ENCODE measurements at regions of chr16 and their contacts with region 1.

Region 1: DNA sequence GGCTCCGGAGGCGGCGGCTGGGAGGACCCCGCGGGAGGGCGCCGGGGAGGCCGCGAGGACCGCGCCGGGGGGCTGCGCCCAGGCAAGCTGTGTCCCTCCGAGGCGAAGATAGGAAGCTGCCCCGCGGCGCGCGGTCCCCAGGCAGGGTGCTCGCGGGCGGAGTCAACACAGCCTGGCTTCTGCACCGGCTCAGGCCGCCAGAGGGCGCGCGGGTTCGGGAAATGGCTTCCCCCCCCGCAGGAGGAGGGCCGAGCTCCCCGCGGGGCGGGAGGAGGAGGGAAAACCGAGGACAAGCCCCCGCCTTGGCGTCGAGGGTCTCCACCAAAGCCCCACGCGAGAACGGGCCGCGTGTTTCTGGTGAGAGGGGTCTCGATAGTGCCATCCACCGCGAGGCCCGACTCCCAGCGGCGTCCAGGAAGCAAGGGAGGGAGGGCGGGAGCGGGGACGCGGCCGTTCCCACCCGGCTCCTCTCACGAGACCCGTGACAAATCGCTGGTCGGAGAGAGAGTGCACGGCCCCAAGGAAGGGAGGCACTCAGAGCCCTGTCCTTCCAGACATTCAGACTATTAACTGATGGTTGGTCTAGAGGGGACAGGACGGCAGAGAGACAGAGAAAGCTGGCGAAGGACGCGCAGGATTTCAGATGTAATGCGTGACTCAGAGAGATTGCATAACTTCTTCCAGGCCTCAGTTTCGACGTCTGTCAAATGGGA is 64.4 kb upstream of the DNAJA2 start:
- DNase-seq: peak; percentile 79 to 89
- ATAC-seq: peak; percentile 92 to 98
- H3K4me3 ChIP-seq: peak overlapping the region; percentile 62
- H3K27ac ChIP-seq: peak overlapping the region; percentile 82 to 95
- H3K4me1 ChIP-seq: no peaks in the 10 kb centered on the region
- CTCF ChIP-seq: peak; percentile 86
- EP300 ChIP-seq: no peak
- POLR2A ChIP-seq: no peak
- RAD21 ChIP-seq: peak; percentile 73 to 87

Region 2: GRCh38 chr16:46783800-46784199 is 254.1 kb before region 1 on chr16:
- CTCF ChIA-PET with region 1: no interaction called
- POLR2A ChIA-PET with region 1: no interaction called
- DNase-seq: no peak
- ATAC-seq: no peak
- H3K4me3 ChIP-seq: no peak overlapping the region
- H3K27ac ChIP-seq: no peak overlapping the region
- H3K4me1 ChIP-seq: no peaks in the 10 kb centered on the region
- CTCF ChIP-seq: no peak
- EP300 ChIP-seq: no peak
- POLR2A ChIP-seq: no peak
- RAD21 ChIP-seq: no peak

Region 3: DNA sequence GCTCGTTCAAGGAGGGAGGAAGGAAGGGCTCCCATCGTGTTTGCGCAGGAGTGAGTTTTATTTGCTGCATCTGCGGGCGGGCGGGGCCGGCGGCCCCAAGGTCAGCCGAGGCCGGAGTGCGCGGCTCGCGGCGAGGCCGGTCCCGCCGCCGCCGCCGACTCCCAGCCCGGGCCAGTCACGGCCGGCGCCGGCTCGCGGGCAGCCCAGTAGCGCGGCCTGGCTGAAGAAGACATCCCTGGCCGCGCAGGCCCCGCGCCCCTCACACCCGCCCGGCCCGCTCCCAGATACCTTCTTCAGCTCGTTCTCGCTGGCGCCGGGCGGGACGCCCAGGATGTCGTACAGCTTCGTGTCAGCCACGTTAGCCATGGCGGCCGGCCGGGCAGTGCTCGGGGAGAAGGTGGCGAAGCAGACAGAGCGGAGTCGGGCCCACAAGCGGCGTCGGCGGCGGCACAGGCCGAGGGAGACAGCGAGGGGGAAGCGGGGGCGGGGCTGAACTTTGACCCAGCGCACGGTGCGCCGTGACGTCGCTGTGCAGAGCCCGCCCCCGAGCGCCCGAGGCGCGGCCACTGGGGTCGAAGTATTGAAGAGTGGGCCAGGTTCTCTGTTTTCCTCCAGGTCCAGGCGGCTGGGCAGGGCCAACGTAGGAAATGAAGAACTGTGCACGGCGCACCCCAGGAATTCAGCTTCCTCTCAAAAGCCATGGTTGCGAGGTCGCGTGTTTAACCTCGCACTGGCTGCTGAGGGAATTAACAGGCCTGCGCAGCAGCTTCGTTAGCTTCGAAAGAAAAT is 64.5 kb before region 1 on chr16 and contains the start of gene DNAJA2:
- CTCF ChIA-PET with region 1: interaction called, 11 read pairs
- POLR2A ChIA-PET with region 1: interaction called, 6 read pairs
- DNase-seq: peak; percentile 85 to 89
- ATAC-seq: peak; percentile 96
- H3K4me3 ChIP-seq: peak within 1 kb of the TSS; percentile 94
- H3K27ac ChIP-seq: peak within 1 kb of the TSS; percentile 97 to 99
- H3K4me1 ChIP-seq: peaks cover 41% of the 10 kb centered on the region
- CTCF ChIP-seq: no peak
- EP300 ChIP-seq: no peak
- POLR2A ChIP-seq: peak; percentile 79; the same call in 1 of the 2 replicates
- RAD21 ChIP-seq: no peak
- polyA plus RNA-seq, gene DNAJA2: 28.8 and 33.7 TPM in 2 replicates

Region 4: DNA sequence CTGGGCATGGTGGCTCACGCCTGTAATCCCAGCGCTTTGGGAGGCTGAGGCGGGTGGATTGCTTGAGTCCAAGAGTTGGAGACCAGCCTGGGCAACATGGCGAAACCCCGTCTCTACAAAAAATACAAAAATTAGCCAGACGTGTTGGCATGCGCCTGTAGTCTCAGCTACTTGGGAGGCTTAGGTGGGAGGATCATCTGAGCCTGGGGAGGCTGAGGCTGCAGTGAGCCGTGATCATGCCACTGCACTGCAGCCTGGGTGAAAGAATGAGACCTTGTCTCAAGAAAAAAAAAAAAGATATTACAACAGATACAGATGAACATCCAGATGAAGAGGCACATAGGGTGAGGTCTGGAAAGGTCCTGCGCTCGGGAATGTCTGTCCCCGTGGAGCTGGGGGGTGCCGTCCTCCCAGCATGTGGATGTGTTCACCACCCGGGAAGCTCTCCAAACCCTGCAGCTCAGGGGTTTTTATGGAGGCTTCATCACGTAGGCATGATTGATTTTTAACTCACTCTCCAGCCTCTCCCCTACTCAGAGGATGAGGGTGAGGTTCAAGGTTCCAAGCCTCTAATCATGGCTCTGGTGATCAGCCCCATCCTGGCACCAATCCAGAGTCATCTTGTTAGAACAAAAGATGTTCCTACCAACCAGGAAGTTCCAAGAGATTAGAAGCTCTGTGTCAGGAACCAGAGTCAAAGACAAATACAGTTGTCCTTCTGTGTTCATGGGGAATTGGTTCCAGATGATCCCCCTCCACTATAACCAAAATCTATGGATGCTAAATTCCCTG is 20.6 kb after region 1 on chr16:
- CTCF ChIA-PET with region 1: interaction called, 10 read pairs
- POLR2A ChIA-PET with region 1: interaction called, 3 read pairs
- DNase-seq: no peak
- ATAC-seq: no peak
- H3K4me3 ChIP-seq: no peak overlapping the region
- H3K27ac ChIP-seq: no peak overlapping the region
- H3K4me1 ChIP-seq: no peaks in the 10 kb centered on the region; the same call in 2 of the 3 replicates
- CTCF ChIP-seq: no peak
- EP300 ChIP-seq: no peak
- POLR2A ChIP-seq: no peak
- RAD21 ChIP-seq: no peak

Region 5: GRCh38 chr16:47084198-47084597 is 46.3 kb after region 1 on chr16:
- CTCF ChIA-PET with region 1: no interaction called
- POLR2A ChIA-PET with region 1: no interaction called
- DNase-seq: no peak
- ATAC-seq: no peak
- H3K4me3 ChIP-seq: no peak overlapping the region
- H3K27ac ChIP-seq: no peak overlapping the region
- H3K4me1 ChIP-seq: no peaks in the 10 kb centered on the region
- CTCF ChIP-seq: no peak
- EP300 ChIP-seq: no peak
- POLR2A ChIP-seq: no peak
- RAD21 ChIP-seq: no peak